ENCODE measurements at regions of chr2 and their contacts with region 1.

Region 1: DNA sequence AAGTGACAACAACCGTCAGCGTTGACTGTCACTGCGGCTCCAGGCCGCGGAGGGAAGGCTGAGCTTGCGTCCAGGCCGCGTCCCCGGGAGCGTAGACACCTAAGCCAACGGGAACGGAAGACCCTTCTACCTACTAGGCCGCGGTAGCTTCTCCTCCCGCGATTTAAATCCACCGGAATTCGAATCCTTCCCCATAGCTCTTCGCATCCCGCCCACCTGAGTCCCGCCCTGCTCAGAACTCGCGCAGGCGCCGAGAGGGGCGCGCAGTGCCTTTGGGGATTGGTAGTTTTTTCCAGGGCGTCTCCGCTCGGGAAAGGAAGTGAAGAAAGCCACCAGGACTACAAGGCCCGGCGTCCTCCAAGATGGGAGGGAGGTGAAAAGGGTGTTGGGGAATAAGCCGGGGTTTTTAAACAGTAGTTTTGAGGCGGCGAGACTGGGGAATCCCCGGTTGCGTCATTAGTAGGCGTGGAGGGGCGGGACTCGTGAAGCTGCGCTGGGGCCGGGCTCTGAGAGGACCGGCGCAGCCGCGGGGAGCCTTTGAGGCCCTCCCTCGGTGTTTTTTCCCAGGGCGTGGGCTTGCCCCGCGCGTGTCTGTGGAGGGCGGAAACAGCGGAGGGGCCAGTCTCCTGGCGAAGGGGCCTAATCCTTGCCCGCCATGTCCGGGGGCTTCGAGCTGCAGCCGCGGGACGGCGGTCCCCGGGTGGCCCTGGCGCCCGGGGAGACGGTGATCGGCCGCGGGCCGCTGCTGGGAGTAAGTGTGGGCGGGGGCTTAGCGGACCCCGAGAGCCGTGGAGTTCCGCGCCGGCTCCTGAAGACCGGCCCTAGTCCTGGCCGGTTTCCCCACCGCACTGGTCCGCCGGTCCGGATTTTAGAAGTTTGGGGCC is at the starts of genes APLF and FBXO48:
- DNase-seq: peak; percentile 99
- ATAC-seq: peak; percentile 95
- H3K4me3 Mint-ChIP-seq: peak within 1 kb of the TSS; percentile 92
- H3K27ac Mint-ChIP-seq: peak within 1 kb of the TSS; percentile 91
- H3K4me1 Mint-ChIP-seq: peaks cover 43% of the 10 kb centered on the region
- H3K27me3 Mint-ChIP-seq: no peaks in the 10 kb centered on the region
- CTCF ChIP-seq: no peak
- total RNA-seq, gene APLF: 2.9 to 3.5 TPM
- total RNA-seq, gene FBXO48: 1.3 to 1.4 TPM

Region 2: DNA sequence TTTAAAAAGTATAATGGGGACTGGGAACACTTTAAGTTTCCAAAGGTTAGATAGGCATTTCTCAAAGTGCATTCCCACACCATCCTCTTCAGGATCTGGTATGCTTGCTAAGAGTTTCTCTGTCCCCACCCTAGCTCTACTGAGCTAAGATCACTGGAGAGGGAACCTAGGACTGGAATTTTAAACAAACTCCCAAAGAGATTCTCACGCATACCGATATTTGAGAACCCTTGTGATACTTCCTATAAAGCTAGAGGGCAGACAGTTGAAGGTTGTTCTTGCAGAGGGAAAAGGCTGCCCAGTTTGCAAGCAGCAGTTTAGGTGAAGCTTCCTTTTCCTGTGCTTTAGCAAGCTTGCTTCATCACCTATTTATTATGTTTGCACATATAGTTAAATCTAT is 151.2 kb before region 1 on chr2:
- CTCF ChIA-PET with region 1: no interaction called
- POLR2A ChIA-PET with region 1: no interaction called
- intact Hi-C with region 1: no loop called
- DNase-seq: no peak
- ATAC-seq: no peak
- H3K4me3 Mint-ChIP-seq: no peak overlapping the region
- H3K27ac Mint-ChIP-seq: no peak overlapping the region
- H3K4me1 Mint-ChIP-seq: peaks cover 8% of the 10 kb centered on the region
- H3K27me3 Mint-ChIP-seq: peaks cover 38% of the 10 kb centered on the region
- CTCF ChIP-seq: no peak

Region 3: GRCh38 chr2:68452168-68452900 is 15.0 kb before region 1 on chr2:
- CTCF ChIA-PET with region 1: interaction called, 47 read pairs
- POLR2A ChIA-PET with region 1: interaction called, 3 read pairs
- intact Hi-C with region 1: no loop called
- DNase-seq: no peak
- ATAC-seq: no peak
- H3K4me3 Mint-ChIP-seq: no peak overlapping the region
- H3K27ac Mint-ChIP-seq: no peak overlapping the region
- H3K4me1 Mint-ChIP-seq: peaks cover 10% of the 10 kb centered on the region
- H3K27me3 Mint-ChIP-seq: no peaks in the 10 kb centered on the region
- CTCF ChIP-seq: no peak

Region 4: GRCh38 chr2:68506170-68506569 is 38.9 kb after region 1 on chr2:
- CTCF ChIA-PET with region 1: interaction called, 14 read pairs
- POLR2A ChIA-PET with region 1: no interaction called
- intact Hi-C with region 1: no loop called
- DNase-seq: no peak
- ATAC-seq: no peak
- H3K4me3 Mint-ChIP-seq: no peak overlapping the region
- H3K27ac Mint-ChIP-seq: peak overlapping the region; percentile 0
- H3K4me1 Mint-ChIP-seq: peaks cover 15% of the 10 kb centered on the region
- H3K27me3 Mint-ChIP-seq: no peaks in the 10 kb centered on the region
- CTCF ChIP-seq: no peak

Region 5: DNA sequence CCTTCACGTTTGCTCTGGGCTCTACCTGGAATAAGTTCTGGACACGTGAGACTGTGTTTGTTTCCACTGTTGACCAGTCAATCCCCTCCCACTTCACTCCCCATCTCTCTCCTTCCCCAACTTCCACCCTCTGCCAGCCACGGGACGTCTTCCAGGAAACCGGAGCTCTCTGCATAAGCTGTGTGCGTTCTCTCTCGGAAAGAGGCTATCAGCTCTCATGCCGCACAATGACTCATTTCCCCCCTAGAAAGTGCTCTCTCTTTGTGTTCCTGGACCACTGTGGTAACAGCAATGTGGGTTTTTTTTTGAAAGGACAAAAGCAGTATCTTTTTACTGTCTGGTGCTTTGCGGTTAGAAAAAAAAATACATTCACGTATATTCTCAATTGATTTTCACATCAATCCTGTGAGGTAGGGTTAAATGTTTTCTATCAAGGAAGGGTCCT is 186.2 kb after region 1 on chr2:
- CTCF ChIA-PET with region 1: interaction called, 10 read pairs
- POLR2A ChIA-PET with region 1: no interaction called
- intact Hi-C with region 1: loop called (anchors 5 kb)
- DNase-seq: peak; percentile 80
- ATAC-seq: peak; percentile 81
- H3K4me3 Mint-ChIP-seq: peak overlapping the region; percentile 42
- H3K27ac Mint-ChIP-seq: peak overlapping the region; percentile 84
- H3K4me1 Mint-ChIP-seq: peaks cover 47% of the 10 kb centered on the region
- H3K27me3 Mint-ChIP-seq: peaks cover 27% of the 10 kb centered on the region
- CTCF ChIP-seq: no peak

Region 6: GRCh38 chr2:68726608-68727367 is 259.5 kb after region 1 on chr2:
- CTCF ChIA-PET with region 1: interaction called, 5 read pairs
- POLR2A ChIA-PET with region 1: no interaction called
- intact Hi-C with region 1: loop called (anchors 10 kb)
- DNase-seq: peak; percentile 96
- ATAC-seq: peak; percentile 94
- H3K4me3 Mint-ChIP-seq: peak overlapping the region; percentile 35
- H3K27ac Mint-ChIP-seq: peak overlapping the region; percentile 81
- H3K4me1 Mint-ChIP-seq: peaks cover 58% of the 10 kb centered on the region
- H3K27me3 Mint-ChIP-seq: no peaks in the 10 kb centered on the region
- CTCF ChIP-seq: no peak

Region 7: DNA sequence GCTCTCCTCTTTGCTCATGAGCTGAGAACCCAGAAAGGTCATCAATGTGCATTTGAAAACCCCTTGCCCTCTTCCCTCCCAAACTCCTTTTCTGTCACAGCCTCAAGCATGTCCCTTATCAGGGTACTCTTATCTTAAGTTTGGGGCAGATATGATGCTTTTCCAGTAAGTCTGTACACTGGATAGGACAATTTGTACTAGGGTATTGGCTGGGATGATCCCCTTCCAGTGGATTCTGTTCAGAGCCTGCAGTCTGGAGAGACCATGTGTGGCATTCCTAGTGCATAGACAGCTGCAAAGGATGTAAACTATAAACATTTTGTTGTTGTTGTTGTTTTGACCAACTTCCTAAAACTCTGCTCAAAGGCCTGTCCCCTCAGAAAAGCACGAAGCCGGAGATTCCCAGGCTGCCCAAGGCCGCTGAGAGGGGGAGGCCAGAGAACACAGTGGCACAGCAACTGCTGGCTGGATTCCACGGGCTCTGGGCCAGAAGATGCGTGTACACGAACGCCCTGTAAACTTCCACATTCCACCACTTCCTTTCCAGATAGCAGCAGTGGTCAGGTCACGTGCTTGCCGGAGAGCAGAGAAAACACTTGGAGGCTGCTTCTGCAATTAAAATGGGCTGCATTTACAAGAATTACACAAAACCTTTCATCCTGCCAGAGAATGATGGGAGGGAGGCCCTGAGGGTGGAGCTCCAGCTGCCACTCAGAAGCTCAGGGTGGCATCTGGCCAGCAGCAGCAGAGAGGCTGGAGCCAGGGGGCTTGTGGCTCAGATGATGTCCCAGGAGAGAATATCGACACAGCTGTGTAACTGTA is 361.8 kb after region 1 on chr2:
- CTCF ChIA-PET with region 1: interaction called, 4 read pairs
- POLR2A ChIA-PET with region 1: no interaction called
- intact Hi-C with region 1: loop called (anchors 5 kb)
- DNase-seq: peak; percentile 75
- ATAC-seq: peak; percentile 22
- H3K4me3 Mint-ChIP-seq: peak overlapping the region; percentile 42
- H3K27ac Mint-ChIP-seq: peak overlapping the region; percentile 87
- H3K4me1 Mint-ChIP-seq: peaks cover 71% of the 10 kb centered on the region
- H3K27me3 Mint-ChIP-seq: no peaks in the 10 kb centered on the region
- CTCF ChIP-seq: no peak

Region 8: DNA sequence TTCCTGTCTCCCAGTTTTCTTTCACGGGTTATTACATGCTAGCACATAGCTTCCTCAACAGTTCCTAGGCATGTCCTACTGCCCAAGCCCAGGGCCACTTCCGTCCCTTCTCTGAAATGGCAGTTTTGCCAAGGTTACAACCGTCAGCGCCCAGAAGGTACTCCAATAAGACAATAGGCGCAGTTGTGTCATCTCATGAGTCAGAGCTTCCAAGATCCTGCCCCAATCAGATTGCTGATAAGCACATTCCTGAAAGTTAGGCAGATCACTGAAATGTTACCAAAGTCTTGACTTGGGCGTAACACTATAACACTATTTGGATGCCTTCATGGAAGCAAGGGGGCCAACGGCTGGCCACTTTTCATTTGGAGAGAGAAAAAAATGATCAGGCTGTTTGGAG is 451.2 kb after region 1 on chr2:
- CTCF ChIA-PET with region 1: interaction called, 139 read pairs
- POLR2A ChIA-PET with region 1: no interaction called
- intact Hi-C with region 1: no loop called
- DNase-seq: no peak
- ATAC-seq: no peak
- H3K4me3 Mint-ChIP-seq: no peak overlapping the region
- H3K27ac Mint-ChIP-seq: no peak overlapping the region
- H3K4me1 Mint-ChIP-seq: peaks cover 2% of the 10 kb centered on the region
- H3K27me3 Mint-ChIP-seq: no peaks in the 10 kb centered on the region
- CTCF ChIP-seq: no peak